ENCODE measurements at regions of chr16 and their contacts with region 1.

Region 1: GRCh38 chr16:87790278-87791032 is 24.7 kb upstream of the KLHDC4 start:
- DNase-seq: no peak
- H3K4me3 ChIP-seq: no peak overlapping the region
- H3K27ac ChIP-seq: no peak overlapping the region
- H3K4me1 ChIP-seq: no peaks in the 10 kb centered on the region
- H3K27me3 ChIP-seq: peaks cover 0 to 2% of the 10 kb centered on the region in 2 experiments
- CTCF ChIP-seq: no peak
- POLR2A ChIP-seq: no peak

Region 2: DNA sequence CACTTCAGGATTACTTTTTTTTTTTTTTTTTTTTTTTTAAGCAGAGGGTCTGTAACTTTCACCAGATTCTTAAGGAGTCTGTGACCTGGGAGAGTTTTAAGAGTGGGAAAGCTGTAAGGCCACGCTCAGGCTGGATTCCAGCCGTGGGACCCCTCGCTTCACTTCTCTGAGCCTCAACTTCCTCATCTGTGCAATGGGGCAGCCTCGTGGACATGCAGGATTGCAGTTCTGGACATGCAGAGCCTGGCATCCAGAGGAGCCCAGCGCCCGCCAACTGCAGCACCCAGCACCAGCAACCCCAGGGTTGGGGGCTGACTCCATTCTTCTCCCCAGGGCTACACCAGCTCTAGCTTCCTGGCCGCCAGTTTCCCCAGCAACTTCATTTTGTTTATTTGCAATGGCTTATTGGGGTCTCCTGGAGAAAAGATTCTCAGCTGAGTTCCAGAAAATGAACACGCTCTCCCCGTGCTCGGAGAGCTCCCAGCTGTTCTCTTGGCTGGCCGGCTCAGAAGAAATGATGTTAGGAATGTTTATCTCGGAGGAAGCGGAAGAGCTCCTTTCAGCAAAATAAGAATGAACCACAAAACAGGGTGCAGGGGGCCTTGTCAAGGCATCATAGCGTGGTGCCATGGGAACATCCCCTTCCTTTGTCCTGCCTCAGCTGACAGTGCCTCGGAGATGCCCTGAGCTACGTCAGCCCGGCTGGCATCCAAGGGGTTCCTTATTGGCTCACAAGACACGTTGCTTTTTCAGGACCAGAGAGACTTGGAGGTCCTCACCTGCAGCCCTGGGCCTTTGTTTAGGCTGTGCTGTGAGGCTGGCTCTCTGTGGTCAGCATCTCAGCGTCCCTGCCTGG is 274.8 kb before region 1 on chr16:
- CTCF ChIA-PET with region 1: no interaction called
- POLR2A ChIA-PET with region 1: no interaction called
- dilution Hi-C with region 1: no loop called
- intact Hi-C with region 1: no loop called
- DNase-seq: no peak
- H3K4me3 ChIP-seq: no peak overlapping the region
- H3K27ac ChIP-seq: no peak overlapping the region
- H3K4me1 ChIP-seq: peaks cover 15% of the 10 kb centered on the region
- H3K27me3 ChIP-seq: no peaks in the 10 kb centered on the region
- CTCF ChIP-seq: no peak
- POLR2A ChIP-seq: no peak

Region 3: GRCh38 chr16:87806603-87807546 is 16.4 kb after region 1 on chr16:
- CTCF ChIA-PET with region 1: interaction called, 14 read pairs
- POLR2A ChIA-PET with region 1: no interaction called
- dilution Hi-C with region 1: no loop called
- intact Hi-C with region 1: no loop called
- DNase-seq: peak; percentile 66
- H3K4me3 ChIP-seq: no peak overlapping the region
- H3K27ac ChIP-seq: no peak overlapping the region
- H3K4me1 ChIP-seq: peaks cover 6% of the 10 kb centered on the region
- H3K27me3 ChIP-seq: no peaks in the 10 kb centered on the region
- CTCF ChIP-seq: no peak
- POLR2A ChIP-seq: no peak

Measured in endothelial cell of umbilical vein (primary cell).